WTC11 (cell line): ENCODE measurements at regions of chr2 and their contacts with region 1.

Region 1: DNA sequence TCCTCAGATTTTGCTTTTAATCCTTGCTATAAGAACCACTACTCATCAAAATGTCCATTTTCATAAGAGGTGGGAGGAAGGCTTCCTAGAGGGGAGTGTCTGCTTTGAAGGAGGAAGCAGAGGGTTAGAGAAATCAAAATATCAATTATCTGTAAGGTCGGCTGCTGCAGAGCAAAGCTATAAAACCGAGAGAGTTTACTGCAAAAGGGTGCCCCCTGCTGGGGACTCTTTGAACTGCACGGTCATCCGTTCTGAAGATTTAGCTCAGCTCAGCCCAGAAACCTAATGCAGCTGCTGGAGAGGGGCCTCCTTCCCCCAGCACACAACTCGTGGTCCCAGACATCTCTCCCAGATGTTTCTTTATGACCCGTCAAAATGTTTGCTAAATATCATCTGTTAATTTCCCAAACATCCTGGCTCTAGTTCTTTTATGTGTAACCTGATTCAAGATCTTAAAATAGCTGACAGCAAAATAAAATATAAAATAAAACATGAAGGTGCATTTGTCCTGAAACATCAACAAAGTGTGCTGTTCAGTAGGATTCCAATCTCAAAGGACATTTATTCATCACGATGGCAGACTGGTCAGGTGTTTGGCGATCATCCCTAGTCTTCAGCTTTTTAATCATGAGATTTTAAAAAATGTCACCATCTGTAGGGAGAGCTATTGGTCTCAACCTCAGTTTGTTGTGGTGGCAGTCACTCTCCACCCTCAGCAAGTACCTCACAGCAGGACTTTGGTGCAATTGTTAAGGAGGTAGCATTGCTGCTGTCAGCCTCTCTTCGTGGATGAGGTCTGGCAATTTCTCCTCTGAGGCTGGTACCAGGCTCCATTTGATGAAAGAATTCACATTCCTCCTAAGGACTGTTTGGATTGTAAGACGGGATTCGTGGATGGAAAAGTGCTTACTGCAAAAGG is 185.9 kb downstream of the MTX2 start:
- DNase-seq: peak; percentile 94
- ATAC-seq: peak; percentile 71
- H3K4me3 Mint-ChIP-seq: no peak overlapping the region
- H3K27ac Mint-ChIP-seq: no peak overlapping the region
- H3K4me1 Mint-ChIP-seq: peaks cover 22% of the 10 kb centered on the region
- H3K27me3 Mint-ChIP-seq: peaks cover 12% of the 10 kb centered on the region
- CTCF ChIP-seq: peak; percentile 97

Region 2: GRCh38 chr2:176140513-176141317 is 314.4 kb before region 1 on chr2:
- CTCF ChIA-PET with region 1: interaction called, 73 read pairs
- POLR2A ChIA-PET with region 1: no interaction called
- DNase-seq: peak; percentile 88
- ATAC-seq: peak; percentile 81
- H3K4me3 Mint-ChIP-seq: peak overlapping the region; percentile 62
- H3K27ac Mint-ChIP-seq: no peak overlapping the region
- H3K4me1 Mint-ChIP-seq: peaks cover 6% of the 10 kb centered on the region
- H3K27me3 Mint-ChIP-seq: peaks cover 98% of the 10 kb centered on the region
- CTCF ChIP-seq: peak; percentile 91

Region 3: DNA sequence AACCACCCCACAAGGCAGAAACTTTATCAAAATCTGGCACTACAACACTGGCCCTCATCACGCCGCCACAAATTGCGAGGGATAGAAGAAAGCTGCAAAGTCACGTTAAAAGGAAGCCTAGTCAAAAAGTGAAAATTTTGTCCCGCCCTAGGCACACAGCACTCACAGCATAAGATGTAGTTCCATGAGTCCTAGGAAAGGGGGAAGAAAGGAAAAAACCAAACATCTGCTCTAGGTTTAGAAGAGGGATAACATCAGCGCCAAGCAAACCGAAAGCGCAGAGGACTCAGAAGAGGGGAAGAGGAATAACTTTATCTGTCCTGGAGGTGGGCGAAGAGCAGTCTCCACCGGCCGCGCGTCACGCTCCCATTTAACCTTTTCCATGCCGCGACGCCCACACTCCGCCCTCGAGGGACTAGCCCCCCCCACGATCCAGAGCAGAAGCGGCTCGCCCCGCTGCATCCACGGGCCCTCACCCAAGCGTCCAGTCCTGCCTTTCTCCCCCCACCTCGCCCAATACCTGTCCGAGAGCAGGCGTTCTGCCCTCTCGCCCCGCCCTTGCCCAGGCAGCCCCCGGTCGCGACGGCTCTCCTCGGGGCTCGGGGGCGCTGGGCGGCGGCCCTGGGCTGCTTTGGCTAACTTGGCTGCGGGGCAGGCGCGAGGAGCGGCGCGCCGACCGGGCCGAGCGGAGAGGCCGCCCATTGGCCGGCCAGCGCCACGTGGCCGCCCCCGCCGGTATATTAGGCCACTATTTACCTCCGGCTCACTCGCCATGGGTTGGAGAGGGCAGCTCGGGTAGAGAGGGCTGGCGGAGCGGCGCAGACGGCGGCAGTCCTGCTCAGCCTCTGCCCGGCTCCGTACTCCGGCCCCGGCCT is 267.0 kb before region 1 on chr2 and contains the start of gene HOXD1:
- CTCF ChIA-PET with region 1: interaction called, 14 read pairs
- POLR2A ChIA-PET with region 1: no interaction called
- DNase-seq: peak; percentile 70
- ATAC-seq: peak; percentile 83
- H3K4me3 Mint-ChIP-seq: peak within 1 kb of the TSS; percentile 72
- H3K27ac Mint-ChIP-seq: no peak within 1 kb of the TSS
- H3K4me1 Mint-ChIP-seq: peaks cover 45% of the 10 kb centered on the region
- H3K27me3 Mint-ChIP-seq: peaks cover 98% of the 10 kb centered on the region
- CTCF ChIP-seq: no peak
- total RNA-seq, gene HOXD1: 0.14 to 0.22 TPM in 2 of 3 replicates, not detected in the other

Region 4: DNA sequence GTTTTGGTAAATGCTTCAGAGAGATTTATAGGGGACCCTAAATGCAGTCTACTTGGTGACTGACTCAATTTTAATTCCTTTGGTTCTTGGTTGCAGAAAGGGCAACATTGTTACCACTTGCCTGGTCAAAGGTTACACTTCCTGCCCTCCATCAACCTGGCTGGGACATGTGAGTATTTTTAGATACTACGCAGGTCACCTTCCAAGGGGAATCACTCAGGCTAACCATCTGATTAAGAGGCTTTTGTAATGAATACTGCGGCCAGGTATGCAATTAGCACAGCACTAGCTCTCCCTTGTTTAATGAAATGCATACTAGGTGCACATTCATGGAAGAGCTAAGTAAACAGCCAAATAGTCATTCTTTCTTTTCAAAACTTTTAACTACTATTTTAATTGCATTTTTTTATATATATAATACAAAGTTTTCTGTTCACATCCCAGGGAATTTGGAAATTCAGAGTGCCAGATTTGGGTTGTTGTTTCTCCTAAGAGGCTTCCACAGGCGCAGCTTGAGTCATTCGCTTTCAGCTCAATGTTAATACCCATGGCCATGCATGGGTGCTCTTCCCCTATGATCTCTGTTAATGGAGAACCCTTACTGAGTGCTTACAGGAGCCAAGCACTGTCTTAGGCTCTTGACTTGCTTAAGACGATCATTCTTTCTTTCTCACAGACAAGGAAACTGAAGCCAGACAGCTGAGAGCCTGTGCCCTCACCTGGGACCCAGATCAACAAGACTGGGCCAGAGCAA is 33.7 kb before region 1 on chr2:
- CTCF ChIA-PET with region 1: interaction called, 11 read pairs
- POLR2A ChIA-PET with region 1: no interaction called
- DNase-seq: no peak
- ATAC-seq: peak; percentile 44
- H3K4me3 Mint-ChIP-seq: no peak overlapping the region
- H3K27ac Mint-ChIP-seq: no peak overlapping the region
- H3K4me1 Mint-ChIP-seq: peaks cover 46% of the 10 kb centered on the region
- H3K27me3 Mint-ChIP-seq: no peaks in the 10 kb centered on the region
- CTCF ChIP-seq: no peak

Region 5: DNA sequence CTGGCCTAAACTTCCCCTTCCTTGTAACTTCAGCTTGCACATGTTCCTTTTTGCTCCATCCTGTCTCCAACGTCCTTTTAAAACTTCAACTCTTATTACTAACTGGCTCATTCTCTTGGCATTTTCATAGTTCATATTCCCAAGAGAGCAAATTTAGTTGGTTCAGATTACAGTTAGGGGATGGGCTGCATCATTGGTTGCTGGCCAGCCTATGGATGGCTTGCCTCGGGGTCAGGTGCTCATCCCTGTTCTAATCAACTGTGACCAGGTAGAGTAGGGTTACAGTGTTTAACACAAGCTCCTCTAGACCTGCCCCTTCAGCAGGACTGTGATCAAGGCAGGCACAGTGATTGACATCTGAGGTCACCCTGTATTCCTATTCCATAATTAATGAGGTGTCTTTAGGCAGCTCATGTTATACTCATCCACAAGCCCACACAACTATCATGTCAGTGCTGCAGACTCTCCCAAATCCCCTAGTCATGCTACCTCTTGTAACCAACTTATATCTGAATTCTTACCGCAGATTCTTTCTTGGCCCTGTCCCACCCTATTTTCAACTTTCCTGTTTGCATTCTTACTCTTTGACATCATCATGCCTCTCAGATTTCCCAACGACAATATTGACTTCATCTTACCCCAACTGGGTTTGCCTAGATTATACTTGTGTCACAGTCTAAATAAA is 107.3 kb after region 1 on chr2:
- CTCF ChIA-PET with region 1: interaction called, 11 read pairs
- POLR2A ChIA-PET with region 1: no interaction called
- DNase-seq: no peak
- ATAC-seq: peak; percentile 58; the same call in 1 of the 2 replicates
- H3K4me3 Mint-ChIP-seq: no peak overlapping the region
- H3K27ac Mint-ChIP-seq: no peak overlapping the region
- H3K4me1 Mint-ChIP-seq: no peaks in the 10 kb centered on the region
- H3K27me3 Mint-ChIP-seq: peaks cover 7% of the 10 kb centered on the region
- CTCF ChIP-seq: no peak

Region 6: DNA sequence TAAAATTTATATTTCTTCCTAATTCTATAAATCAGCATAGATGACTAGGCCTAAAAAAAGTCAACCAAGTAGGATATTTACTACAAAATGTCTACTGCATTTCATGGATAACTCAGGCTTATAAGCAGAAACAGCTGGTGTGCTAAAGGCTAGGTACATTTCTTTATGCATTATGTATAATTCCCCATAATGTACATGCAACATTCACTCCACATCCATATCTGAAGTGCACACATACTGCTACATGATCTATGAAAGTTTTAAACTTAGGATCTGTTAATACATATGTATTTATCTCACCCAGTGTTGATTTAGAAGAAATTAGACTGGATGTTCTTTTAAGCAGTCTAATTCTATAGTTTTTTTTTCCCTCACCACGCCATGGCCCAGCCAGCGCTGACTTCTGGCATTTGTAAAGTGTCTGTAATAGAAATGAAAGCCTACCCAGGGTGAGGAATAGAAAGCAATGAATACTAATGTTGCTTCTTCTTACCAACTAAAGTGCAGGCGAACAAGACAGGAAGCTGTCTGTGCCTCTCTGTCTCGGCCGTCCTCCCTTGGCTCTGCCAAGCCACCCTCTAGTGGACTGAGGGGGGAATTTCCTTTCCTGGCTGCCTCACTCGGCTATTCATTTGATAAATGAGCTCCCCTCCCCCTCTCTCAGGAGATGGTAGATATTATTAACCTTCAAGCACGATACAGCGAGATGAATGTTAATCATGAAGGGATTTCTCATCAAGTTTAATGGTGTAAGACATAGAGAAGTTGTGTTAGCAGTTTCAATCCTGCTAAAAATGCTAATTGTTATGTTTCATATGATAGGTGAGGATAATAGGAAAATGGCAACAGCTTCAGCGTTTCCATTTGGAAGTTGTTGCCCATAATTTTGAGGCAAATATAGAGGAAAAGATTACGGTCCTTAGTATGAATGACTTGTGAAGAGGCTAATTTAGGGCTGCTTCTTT is 198.6 kb after region 1 on chr2:
- CTCF ChIA-PET with region 1: interaction called, 11 read pairs
- POLR2A ChIA-PET with region 1: no interaction called
- DNase-seq: peak; percentile 74
- ATAC-seq: peak; percentile 98
- H3K4me3 Mint-ChIP-seq: 0 out of 2 replicates have a peak overlapping the region, but pooled peaks have one; percentile 21
- H3K27ac Mint-ChIP-seq: no peak overlapping the region
- H3K4me1 Mint-ChIP-seq: peaks cover 39% of the 10 kb centered on the region
- H3K27me3 Mint-ChIP-seq: peaks cover 16% of the 10 kb centered on the region
- CTCF ChIP-seq: peak; percentile 91